Brain microvascular endothelial cell (primary cell): ENCODE measurements at regions of chr2 and their contacts with region 1.

Region 1: GRCh38 chr2:209977386-209978239 is 24.8 kb upstream of the RPE start:
- DNase-seq: no peak
- H3K4me3 ChIP-seq: no peak overlapping the region
- H3K27ac ChIP-seq: no peak overlapping the region
- H3K27me3 ChIP-seq: no peaks in the 10 kb centered on the region
- CTCF ChIP-seq: peak; percentile 10

Region 2: GRCh38 chr2:210195101-210195852 is 217.7 kb after region 1 on chr2:
- in situ Hi-C with region 1: loop called (anchors 10 kb)
- DNase-seq: peak; percentile 7
- H3K4me3 ChIP-seq: peak overlapping the region; percentile 43
- H3K27ac ChIP-seq: no peak overlapping the region
- H3K27me3 ChIP-seq: no peaks in the 10 kb centered on the region
- CTCF ChIP-seq: peak; percentile 43

Region 3: DNA sequence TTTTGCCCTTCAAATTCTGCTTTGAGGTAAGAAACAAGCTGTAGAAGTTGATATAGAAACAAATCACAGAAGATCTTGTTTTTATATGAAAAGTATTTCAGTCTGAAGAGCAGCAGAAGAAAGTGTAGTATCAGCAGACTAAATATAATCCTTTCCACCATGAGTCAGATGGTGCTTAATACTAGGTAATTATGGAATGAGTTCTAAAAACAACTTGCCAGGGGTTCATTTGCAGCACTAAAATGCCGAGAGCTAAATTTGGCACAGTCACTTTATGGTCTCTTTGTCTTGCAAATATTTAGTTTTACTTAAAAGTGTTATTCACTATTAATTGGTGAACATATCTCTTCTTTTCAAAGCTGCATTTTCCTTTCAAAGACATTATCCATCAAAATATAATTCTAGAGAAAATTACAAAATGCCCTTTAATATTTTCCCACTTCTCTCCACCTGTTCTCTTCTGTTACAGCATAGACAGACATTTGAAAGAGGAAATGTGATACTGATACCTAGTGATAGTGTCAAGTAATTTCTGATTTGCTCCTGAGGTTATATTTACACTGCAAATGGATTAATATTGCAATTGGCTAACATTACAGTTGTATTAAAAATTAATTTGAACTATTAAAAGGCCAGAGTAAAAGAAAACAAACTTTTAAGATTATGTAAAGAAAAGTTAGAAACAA is 332.1 kb after region 1 on chr2:
- in situ Hi-C with region 1: no loop called
- DNase-seq: no peak
- H3K4me3 ChIP-seq: no peak overlapping the region
- H3K27ac ChIP-seq: no peak overlapping the region
- H3K27me3 ChIP-seq: no peaks in the 10 kb centered on the region
- CTCF ChIP-seq: no peak

Region 4: GRCh38 chr2:210370562-210370961 is 392.9 kb after region 1 on chr2:
- in situ Hi-C with region 1: no loop called
- DNase-seq: no peak
- H3K4me3 ChIP-seq: no peak overlapping the region
- H3K27ac ChIP-seq: no peak overlapping the region
- H3K27me3 ChIP-seq: no peaks in the 10 kb centered on the region
- CTCF ChIP-seq: no peak